Vagina (tissue), 2 donors: ENCODE measurements at regions of chr12 and their contacts with region 1.

Region 1: DNA sequence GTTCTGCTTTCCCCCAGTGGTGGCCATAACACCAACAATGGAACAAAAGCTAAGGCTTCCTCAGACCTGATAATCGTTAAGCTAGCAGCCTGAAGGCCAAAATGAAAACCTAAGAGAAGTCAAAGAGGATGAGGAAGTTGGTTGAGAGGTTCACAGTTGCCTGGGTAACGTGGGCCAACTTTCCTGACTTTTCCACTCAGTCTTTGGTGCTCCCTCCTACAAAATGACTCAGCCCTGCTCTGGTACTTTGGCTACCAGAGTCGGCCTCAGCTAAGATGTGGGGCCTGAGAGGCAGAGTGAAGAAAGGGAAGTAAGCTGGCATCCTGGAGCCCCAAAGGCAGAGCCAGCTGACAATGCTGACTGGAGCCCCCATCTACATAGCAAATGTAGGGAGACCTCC is 14.9 kb upstream of the FKBP11 start:
- DNase-seq: no peak
- H3K4me3 ChIP-seq: no peak overlapping the region
- H3K27ac ChIP-seq: no peak overlapping the region
- H3K4me1 ChIP-seq: peaks cover 38% of the 10 kb centered on the region
- H3K27me3 ChIP-seq: no peaks in the 10 kb centered on the region
- CTCF ChIP-seq: no peak
- POLR2A ChIP-seq: no peak

Region 2: GRCh38 chr12:48379780-48380179 is 560.4 kb before region 1 on chr12:
- intact Hi-C with region 1: loop called (anchors 5 kb)
- DNase-seq: no peak
- H3K4me3 ChIP-seq: no peak overlapping the region
- H3K27ac ChIP-seq: no peak overlapping the region
- H3K4me1 ChIP-seq: no peaks in the 10 kb centered on the region
- H3K27me3 ChIP-seq: no peaks in the 10 kb centered on the region
- CTCF ChIP-seq: no peak
- POLR2A ChIP-seq: no peak